ENCODE measurements at regions of chr6 and their contacts with region 1.

Region 1: DNA sequence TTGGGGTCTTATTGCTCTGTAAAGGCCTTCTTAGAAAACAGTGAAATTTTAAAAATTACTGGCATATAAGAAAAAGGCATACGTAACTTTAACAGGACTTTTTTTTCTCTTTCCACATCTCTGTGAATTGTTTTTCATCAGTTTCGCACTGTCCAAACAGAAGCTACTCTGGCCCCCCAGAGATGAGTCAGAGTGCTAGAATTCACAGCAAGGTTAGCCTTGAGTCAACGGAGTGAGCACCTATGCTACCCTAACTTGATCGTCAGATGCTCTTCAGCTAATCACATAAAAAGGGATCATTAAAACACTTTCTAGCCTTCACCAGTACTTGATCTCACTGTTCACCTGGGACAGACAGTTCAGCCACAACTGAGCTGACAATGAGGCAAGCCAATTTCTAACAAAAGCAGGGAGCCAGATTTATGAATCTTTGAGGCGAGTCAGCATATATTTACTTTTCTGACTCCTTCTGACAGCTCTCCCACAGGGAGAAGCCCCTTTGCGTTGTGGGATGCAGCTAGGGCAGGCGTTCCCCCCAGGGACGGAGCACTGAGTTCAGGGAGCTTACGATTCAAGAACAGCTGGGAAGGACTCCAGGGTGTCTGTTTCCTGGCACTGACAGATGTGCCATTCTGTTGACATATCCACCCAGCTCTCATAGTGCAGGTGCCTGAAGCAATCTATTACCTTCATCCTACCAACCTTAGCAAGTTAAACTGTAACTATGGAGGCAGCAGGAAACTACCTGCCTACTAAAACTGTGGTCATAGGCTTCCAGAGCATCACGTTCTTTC is 46.4 kb upstream of the SPDEF start:
- DNase-seq: no peak
- ATAC-seq: no peak
- H3K4me3 ChIP-seq: no peak overlapping the region
- H3K27ac ChIP-seq: no peak overlapping the region
- H3K4me1 ChIP-seq: peaks cover 10 to 17% of the 10 kb centered on the region in 2 donors
- H3K27me3 ChIP-seq: no peaks in the 10 kb centered on the region
- CTCF ChIP-seq: no peak

Region 2: GRCh38 chr6:34476447-34476846 is 126.1 kb before region 1 on chr6:
- intact Hi-C with region 1: no loop called
- DNase-seq: no peak
- ATAC-seq: no peak
- H3K4me3 ChIP-seq: no peak overlapping the region
- H3K27ac ChIP-seq: no peak overlapping the region
- H3K4me1 ChIP-seq: no peaks in the 10 kb centered on the region
- H3K27me3 ChIP-seq: no peaks in the 10 kb centered on the region
- CTCF ChIP-seq: no peak

Region 3: DNA sequence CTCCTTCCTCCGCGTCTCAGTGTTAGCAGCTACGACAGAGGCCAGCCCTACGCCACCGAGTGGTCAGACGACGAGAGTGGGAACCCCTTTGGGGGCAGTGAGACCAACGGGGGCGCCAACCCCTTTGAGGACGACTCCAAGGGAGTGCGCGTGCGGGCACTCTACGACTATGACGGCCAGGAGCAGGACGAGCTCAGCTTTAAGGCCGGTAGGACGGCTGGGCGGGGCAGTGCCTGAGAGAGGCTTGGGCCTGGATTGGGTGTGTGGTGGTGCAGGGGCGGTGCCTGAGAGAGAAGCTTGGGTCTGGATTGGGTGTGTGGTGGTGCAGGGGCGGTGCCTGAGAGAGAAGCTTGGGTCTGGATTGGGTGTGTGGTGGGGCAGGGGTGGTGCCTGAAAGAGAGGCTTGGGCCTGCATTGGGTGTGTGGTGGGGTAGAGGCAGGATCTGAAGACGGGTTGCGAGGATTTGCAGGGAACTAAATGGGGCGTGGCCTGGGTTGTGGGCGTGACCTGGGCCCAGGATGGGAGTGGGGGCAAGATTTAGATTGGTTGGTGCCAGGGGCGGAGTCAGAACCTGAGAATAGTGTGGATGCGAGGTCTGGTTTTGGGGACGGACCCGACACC is 70.8 kb before region 1 on chr6:
- intact Hi-C with region 1: loop called in 1 of 2 experiments (anchors 10 kb)
- DNase-seq: peak in 2 of 4 donors; percentile 70 to 80
- ATAC-seq: no peak
- H3K4me3 ChIP-seq: no peak overlapping the region
- H3K27ac ChIP-seq: no peak overlapping the region
- H3K4me1 ChIP-seq: peaks cover 4 to 6% of the 10 kb centered on the region in 2 donors
- H3K27me3 ChIP-seq: no peaks in the 10 kb centered on the region
- CTCF ChIP-seq: no peak